ENCODE measurements at regions of chr2 and their contacts with region 1.

Region 1: GRCh38 chr2:130873700-130874346 is 37.1 kb downstream of the ARHGEF4 start:
- DNase-seq: peak; percentile 87
- ATAC-seq: peak; percentile 90
- H3K4me3 Mint-ChIP-seq: no peak overlapping the region
- H3K27ac Mint-ChIP-seq: no peak overlapping the region
- H3K4me1 Mint-ChIP-seq: peaks cover 2% of the 10 kb centered on the region
- H3K27me3 Mint-ChIP-seq: peaks cover 9% of the 10 kb centered on the region
- CTCF ChIP-seq: peak; percentile 68

Region 2: DNA sequence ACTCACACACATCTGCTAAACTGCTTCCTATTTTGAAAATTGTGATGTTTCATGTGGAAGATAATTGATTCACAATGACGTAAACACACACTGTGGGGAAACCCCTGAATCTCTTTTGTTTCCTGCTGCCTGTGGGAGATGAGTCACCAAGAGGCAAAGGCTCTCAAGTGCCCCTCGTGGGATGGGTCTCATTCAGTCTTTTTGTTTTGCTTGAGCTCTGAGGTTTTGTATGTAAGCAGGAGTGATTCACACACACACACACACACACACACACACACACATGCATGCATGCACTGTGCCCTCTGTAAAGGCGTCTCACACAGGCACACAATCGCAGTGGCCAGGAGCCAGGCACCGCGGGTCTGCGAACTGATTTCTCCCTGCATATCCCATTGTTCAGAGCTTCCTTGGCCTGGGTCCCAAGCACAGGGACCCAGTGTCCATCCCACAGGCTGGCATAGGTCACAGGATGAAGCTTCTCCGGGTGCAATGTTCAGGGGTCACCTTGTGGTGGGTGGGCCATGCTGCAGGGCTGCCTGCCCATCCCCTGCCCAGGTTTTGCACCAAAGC is 49.2 kb before region 1 on chr2:
- CTCF ChIA-PET with region 1: interaction called, 10 read pairs
- POLR2A ChIA-PET with region 1: no interaction called
- intact Hi-C with region 1: no loop called
- DNase-seq: peak; percentile 88
- ATAC-seq: peak; percentile 91
- H3K4me3 Mint-ChIP-seq: peak overlapping the region; percentile 29
- H3K27ac Mint-ChIP-seq: peak overlapping the region; percentile 93
- H3K4me1 Mint-ChIP-seq: peaks cover 25% of the 10 kb centered on the region
- H3K27me3 Mint-ChIP-seq: peaks cover 2% of the 10 kb centered on the region
- CTCF ChIP-seq: no peak

Region 3: DNA sequence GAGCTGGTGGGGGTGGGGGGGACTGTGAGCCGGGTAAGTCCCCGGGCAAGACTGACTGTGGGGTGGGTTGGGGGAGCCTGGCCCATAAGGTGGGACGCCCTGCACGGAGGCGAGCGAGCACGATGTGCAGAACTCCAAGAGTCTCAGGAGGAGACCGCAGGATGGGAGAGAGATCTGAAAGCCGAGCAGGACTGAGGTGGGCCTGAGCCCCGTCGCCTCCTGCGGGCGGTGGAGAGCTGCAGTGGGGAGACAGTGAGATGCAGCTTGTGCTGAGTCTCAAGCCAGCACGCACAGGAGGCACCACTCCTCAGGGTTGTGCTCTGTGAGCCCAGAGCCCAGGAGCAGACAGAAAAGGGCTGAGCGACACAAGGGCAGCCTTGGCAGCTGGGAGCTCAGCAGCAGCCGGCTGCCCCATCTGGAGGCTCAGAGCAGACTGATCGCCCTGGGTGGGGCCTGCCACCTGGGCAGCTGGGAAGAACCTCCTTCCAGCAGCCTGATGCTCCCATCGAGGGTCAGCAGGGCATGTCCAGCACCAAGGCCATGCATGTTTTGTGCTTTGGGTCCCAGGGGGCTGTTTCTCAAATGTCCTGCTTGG is 21.2 kb before region 1 on chr2:
- CTCF ChIA-PET with region 1: interaction called, 12 read pairs
- POLR2A ChIA-PET with region 1: no interaction called
- intact Hi-C with region 1: no loop called
- DNase-seq: no peak
- ATAC-seq: no peak
- H3K4me3 Mint-ChIP-seq: no peak overlapping the region
- H3K27ac Mint-ChIP-seq: no peak overlapping the region
- H3K4me1 Mint-ChIP-seq: no peaks in the 10 kb centered on the region
- H3K27me3 Mint-ChIP-seq: no peaks in the 10 kb centered on the region
- CTCF ChIP-seq: no peak

Region 4: GRCh38 chr2:130884503-130884902 is 10.7 kb after region 1 on chr2:
- CTCF ChIA-PET with region 1: interaction called, 19 read pairs
- POLR2A ChIA-PET with region 1: no interaction called
- intact Hi-C with region 1: no loop called
- DNase-seq: no peak
- ATAC-seq: no peak
- H3K4me3 Mint-ChIP-seq: no peak overlapping the region
- H3K27ac Mint-ChIP-seq: no peak overlapping the region
- H3K4me1 Mint-ChIP-seq: no peaks in the 10 kb centered on the region
- H3K27me3 Mint-ChIP-seq: peaks cover 4% of the 10 kb centered on the region
- CTCF ChIP-seq: no peak

Region 5: DNA sequence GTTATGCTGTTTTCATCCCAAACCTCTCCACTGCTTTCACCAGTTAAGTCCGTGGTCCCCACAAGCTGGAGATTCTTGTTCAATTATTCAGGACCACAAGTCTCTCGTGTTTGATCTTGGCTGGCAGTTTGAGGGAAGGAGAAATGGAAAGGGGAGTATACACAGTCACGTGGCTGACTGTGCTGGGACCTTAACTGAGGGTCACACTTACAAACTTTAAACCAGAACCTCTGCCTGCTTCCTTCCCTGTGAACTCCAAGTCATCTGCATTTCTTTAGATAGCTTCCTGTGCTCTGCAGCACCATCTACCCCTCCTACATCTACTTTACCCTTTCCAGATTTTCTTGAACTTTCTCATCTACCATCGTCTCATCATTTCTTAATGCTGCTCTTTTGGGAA is 54.6 kb after region 1 on chr2:
- CTCF ChIA-PET with region 1: no interaction called
- POLR2A ChIA-PET with region 1: no interaction called
- intact Hi-C with region 1: no loop called
- DNase-seq: no peak
- ATAC-seq: no peak
- H3K4me3 Mint-ChIP-seq: no peak overlapping the region
- H3K27ac Mint-ChIP-seq: no peak overlapping the region
- H3K4me1 Mint-ChIP-seq: no peaks in the 10 kb centered on the region
- H3K27me3 Mint-ChIP-seq: peaks cover 6% of the 10 kb centered on the region
- CTCF ChIP-seq: no peak

Region 6: GRCh38 chr2:131366643-131367042 is 492.8 kb after region 1 on chr2:
- CTCF ChIA-PET with region 1: no interaction called
- POLR2A ChIA-PET with region 1: no interaction called
- intact Hi-C with region 1: no loop called
- DNase-seq: no peak
- ATAC-seq: no peak
- H3K4me3 Mint-ChIP-seq: no peak overlapping the region
- H3K27ac Mint-ChIP-seq: no peak overlapping the region
- H3K4me1 Mint-ChIP-seq: peaks cover 5% of the 10 kb centered on the region
- H3K27me3 Mint-ChIP-seq: peaks cover 26% of the 10 kb centered on the region
- CTCF ChIP-seq: no peak